ENCODE measurements at regions of chr5 and their contacts with region 1.

Region 1: GRCh38 chr5:172603251-172603806 is 37.7 kb upstream of the NEURL1B start:
- DNase-seq: peak in 1 of 2 donors; percentile 70
- ATAC-seq: peak; percentile 27 to 68 (median 48)
- H3K4me3 ChIP-seq: peak overlapping the region in 1 of 10 donors; percentile 16
- H3K27ac ChIP-seq: peak overlapping the region; percentile 72 to 96 (median 88)
- H3K4me1 ChIP-seq: peaks cover 7 to 81% (median 37%) of the 10 kb centered on the region in 9 donors
- H3K27me3 ChIP-seq: no peaks in the 10 kb centered on the region
- CTCF ChIP-seq: no peak

Region 2: GRCh38 chr5:172486451-172486850 is 116.9 kb before region 1 on chr5:
- intact Hi-C with region 1: loop called in 1 of 10 experiments (anchors 5 kb)
- DNase-seq: peak; percentile 27 to 40
- ATAC-seq: peak; percentile 39 to 90 (median 66)
- H3K4me3 ChIP-seq: no peak overlapping the region
- H3K27ac ChIP-seq: peak overlapping the region in 8 of 10 donors; percentile 14 to 66 (median 51)
- H3K4me1 ChIP-seq: peaks cover 0 to 43% (median 9%) of the 10 kb centered on the region in 9 donors
- H3K27me3 ChIP-seq: no peaks in the 10 kb centered on the region
- CTCF ChIP-seq: no peak

Measured in heart right ventricle (tissue), 16 donors.